Endothelial cell of umbilical vein (primary cell): ENCODE measurements at regions of chr5 and their contacts with region 1.

Region 1: GRCh38 chr5:149141224-149141956 is at the start of gene ABLIM3:
- DNase-seq: peak; percentile 76
- H3K4me3 ChIP-seq: peak within 1 kb of the TSS; percentile 61 to 82 (median 66)
- H3K27ac ChIP-seq: peak within 1 kb of the TSS; percentile 65
- H3K4me1 ChIP-seq: peaks cover 33% of the 10 kb centered on the region
- H3K27me3 ChIP-seq: no peaks in the 10 kb centered on the region
- CTCF ChIP-seq: peak; percentile 89 to 97
- POLR2A ChIP-seq: no peak
- total RNA-seq, gene ABLIM3: 25.7 and 42.1 TPM in 2 replicates

Region 2: DNA sequence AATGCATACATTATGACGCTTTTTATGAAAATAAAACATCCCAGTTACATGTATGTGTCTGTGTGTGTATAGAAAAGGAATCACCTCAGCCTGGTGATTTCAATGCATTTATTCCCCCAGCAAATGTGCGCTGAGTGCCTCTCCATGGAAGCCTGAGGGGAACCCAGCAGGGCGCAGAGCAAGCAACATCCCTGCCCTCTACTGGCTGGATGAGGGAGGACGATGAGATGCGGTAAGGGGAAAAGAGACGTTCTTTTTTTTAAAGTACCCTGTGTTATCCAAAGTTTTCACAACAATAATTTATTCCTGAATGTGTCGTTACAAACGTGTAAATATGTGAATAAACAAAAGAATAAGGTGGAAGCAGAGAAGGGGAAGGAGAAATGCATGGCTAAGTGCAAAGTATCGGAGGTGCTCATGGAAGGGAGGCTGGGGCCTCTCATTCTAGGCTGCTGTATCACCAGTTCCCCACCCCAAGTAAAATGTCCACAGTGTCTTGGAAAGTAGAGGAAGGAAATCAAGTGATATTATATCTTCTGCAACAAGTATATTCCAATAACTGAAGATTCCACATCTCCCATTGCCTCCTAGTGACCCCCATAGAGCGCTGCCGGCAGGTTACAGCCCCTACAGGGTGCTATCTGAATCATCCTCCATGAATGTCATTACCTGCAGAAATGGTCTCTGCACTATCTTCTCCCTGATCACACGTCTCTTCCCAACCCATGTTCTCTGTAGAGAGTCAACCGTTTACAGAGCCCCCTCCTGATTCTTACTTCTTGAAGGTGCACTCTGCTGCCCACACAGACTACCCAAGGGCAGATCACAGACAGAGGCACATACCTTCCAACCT is 13.1 kb before region 1 on chr5:
- CTCF ChIA-PET with region 1: interaction called, 13 read pairs
- POLR2A ChIA-PET with region 1: no interaction called
- dilution Hi-C with region 1: no loop called
- intact Hi-C with region 1: no loop called
- DNase-seq: peak; percentile 16
- H3K4me3 ChIP-seq: no peak overlapping the region
- H3K27ac ChIP-seq: no peak overlapping the region
- H3K4me1 ChIP-seq: peaks cover 12% of the 10 kb centered on the region
- H3K27me3 ChIP-seq: no peaks in the 10 kb centered on the region
- CTCF ChIP-seq: peak; percentile 75 to 80
- POLR2A ChIP-seq: no peak

Region 3: DNA sequence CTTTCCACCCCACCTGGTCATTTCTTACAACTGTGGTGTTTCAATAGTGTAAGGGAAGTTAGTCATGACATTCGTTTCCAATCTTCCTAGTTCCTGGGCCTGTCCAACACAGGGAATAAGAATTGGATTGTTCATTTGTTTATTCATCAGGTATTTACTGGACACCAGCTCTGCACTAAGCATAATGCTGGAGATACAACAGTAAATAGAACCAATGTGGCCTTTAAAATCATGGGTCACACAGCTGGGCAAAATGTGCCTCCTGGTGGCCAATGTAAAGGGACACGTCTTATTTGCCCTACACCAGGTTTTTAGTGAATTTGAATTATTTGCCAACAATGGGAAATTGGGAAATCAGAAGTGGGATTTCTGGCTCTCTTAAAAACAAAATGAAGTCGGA is 10.3 kb after region 1 on chr5:
- CTCF ChIA-PET with region 1: interaction called, 30 read pairs
- POLR2A ChIA-PET with region 1: no interaction called
- dilution Hi-C with region 1: no loop called
- intact Hi-C with region 1: no loop called
- DNase-seq: peak; percentile 55
- H3K4me3 ChIP-seq: no peak overlapping the region
- H3K27ac ChIP-seq: peak overlapping the region; percentile 86
- H3K4me1 ChIP-seq: peaks cover 42% of the 10 kb centered on the region
- H3K27me3 ChIP-seq: no peaks in the 10 kb centered on the region
- CTCF ChIP-seq: peak; percentile 20 to 32
- POLR2A ChIP-seq: no peak

Region 4: GRCh38 chr5:149174847-149175234 is 33.5 kb after region 1 on chr5:
- CTCF ChIA-PET with region 1: interaction called, 4 read pairs
- POLR2A ChIA-PET with region 1: no interaction called
- dilution Hi-C with region 1: no loop called
- intact Hi-C with region 1: loop called (anchors 1 kb)
- DNase-seq: no peak
- H3K4me3 ChIP-seq: no peak overlapping the region
- H3K27ac ChIP-seq: peak overlapping the region; percentile 81
- H3K4me1 ChIP-seq: peaks cover 36% of the 10 kb centered on the region
- H3K27me3 ChIP-seq: no peaks in the 10 kb centered on the region
- CTCF ChIP-seq: no peak
- POLR2A ChIP-seq: no peak

Region 5: GRCh38 chr5:149212198-149212951 is 71.0 kb after region 1 on chr5:
- CTCF ChIA-PET with region 1: interaction called, 11 read pairs
- POLR2A ChIA-PET with region 1: no interaction called
- dilution Hi-C with region 1: no loop called
- intact Hi-C with region 1: loop called (anchors 1 kb)
- DNase-seq: peak; percentile 93
- H3K4me3 ChIP-seq: no peak overlapping the region
- H3K27ac ChIP-seq: peak overlapping the region; percentile 64
- H3K4me1 ChIP-seq: peaks cover 36% of the 10 kb centered on the region
- H3K27me3 ChIP-seq: no peaks in the 10 kb centered on the region
- CTCF ChIP-seq: no peak
- POLR2A ChIP-seq: no peak

Region 6: DNA sequence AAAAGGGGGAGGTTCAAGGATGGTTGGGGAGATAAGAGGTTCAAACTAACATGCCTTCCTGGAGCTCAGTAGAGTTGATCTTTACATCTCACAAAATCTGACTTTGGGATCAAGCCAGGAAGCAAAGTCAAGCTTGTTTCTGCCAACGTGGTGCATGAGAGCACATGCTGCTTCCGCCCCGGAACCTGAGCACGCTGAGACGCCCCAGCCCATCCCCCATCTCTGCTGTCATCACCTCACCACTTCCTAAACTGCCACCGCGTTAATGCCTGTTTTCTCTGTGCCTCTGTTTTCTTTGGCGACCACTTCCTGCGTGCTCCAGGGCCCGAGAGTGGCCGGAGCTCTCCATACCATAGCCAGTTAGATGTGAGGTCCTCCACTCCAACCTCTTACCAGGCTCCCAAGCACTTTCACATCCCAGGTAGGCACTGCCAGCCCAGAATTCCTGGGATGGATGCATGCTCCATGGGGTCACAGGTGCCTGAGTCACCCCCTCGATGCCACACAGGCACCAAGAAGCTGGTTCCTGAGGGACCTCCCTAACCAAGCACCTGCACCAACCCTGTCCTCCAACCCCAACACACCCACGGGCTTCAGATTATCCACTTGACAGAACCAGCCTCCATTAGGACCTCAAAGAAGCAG is 99.1 kb after region 1 on chr5:
- CTCF ChIA-PET with region 1: interaction called, 20 read pairs
- POLR2A ChIA-PET with region 1: no interaction called
- dilution Hi-C with region 1: no loop called
- intact Hi-C with region 1: no loop called
- DNase-seq: no peak
- H3K4me3 ChIP-seq: no peak overlapping the region
- H3K27ac ChIP-seq: no peak overlapping the region
- H3K4me1 ChIP-seq: peaks cover 9% of the 10 kb centered on the region
- H3K27me3 ChIP-seq: no peaks in the 10 kb centered on the region
- CTCF ChIP-seq: no peak
- POLR2A ChIP-seq: no peak

Region 7: DNA sequence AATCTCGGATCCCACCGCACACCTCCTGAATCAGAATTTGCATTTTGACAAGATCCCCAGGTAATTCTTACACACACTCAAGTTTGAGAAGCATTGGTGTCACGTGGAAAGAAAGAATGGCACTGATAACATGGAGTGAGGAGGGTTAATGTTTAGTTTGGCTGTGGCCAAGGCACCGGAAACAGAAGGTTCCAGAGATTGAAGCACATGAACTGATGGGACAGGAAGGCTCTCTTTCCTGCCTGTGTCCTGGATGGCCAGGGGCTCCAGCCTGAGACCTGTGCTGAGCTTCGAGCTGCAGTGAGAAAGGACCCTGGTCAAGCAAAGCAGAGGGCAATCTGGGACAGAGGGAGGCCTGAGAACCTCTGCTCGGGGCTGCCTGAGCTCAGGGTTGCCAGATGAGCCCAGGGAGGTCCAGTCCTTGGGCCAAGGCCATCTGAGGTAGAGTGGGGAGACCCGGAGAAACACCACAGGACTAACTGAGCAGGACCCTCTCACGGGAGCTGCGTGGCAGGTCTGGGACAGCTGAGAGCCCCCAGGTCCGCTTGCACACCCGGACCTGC is 157.5 kb after region 1 on chr5:
- CTCF ChIA-PET with region 1: no interaction called
- POLR2A ChIA-PET with region 1: no interaction called
- dilution Hi-C with region 1: no loop called
- intact Hi-C with region 1: no loop called
- DNase-seq: peak; percentile 97
- H3K4me3 ChIP-seq: no peak overlapping the region
- H3K27ac ChIP-seq: peak overlapping the region; percentile 80
- H3K4me1 ChIP-seq: peaks cover 28% of the 10 kb centered on the region
- H3K27me3 ChIP-seq: no peaks in the 10 kb centered on the region
- CTCF ChIP-seq: no peak
- POLR2A ChIP-seq: peak; percentile 75

Region 8: DNA sequence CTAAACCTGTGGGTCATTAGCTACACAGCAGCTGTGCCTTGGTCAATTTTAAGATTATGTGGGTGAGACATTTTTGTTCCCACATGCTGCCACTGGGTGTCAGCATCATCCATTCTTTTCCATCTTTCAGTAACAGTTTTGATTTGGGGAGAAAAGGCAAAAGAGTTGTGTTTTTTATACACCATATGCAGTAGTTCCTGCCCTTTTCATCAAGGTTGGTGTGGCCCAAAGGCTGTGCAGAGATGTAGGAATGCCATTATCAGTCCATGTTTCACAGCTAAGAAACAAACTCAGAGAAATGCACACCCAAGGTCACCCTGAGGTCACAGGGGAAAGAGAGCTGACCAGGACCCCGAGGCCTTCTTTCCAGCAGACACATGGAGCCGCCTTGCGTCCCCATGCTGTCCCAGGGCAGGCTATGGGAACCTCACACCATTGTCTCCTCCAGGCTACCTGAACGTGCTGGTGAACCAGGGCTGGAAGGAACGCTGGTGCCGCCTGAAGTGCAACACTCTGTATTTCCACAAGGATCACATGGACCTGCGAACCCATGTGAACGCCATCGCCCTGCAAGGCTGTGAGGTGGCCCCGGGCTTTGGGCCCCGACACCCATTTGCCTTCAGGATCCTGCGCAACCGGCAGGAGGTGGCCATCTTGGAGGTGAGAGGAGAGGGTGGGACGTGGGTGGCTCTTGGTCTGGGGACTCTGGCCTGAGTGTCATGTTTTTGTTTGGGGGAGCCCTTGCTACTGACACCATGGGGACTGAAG is 176.1 kb after region 1 on chr5:
- CTCF ChIA-PET with region 1: no interaction called
- POLR2A ChIA-PET with region 1: interaction called, 10 read pairs
- dilution Hi-C with region 1: no loop called
- intact Hi-C with region 1: no loop called
- DNase-seq: peak; percentile 62
- H3K4me3 ChIP-seq: no peak overlapping the region
- H3K27ac ChIP-seq: no peak overlapping the region
- H3K4me1 ChIP-seq: peaks cover 22% of the 10 kb centered on the region
- H3K27me3 ChIP-seq: no peaks in the 10 kb centered on the region
- CTCF ChIP-seq: peak; percentile 51 to 64
- POLR2A ChIP-seq: no peak